ENCODE measurements at regions of chr5 and their contacts with region 1.

Region 1: GRCh38 chr5:91311697-91312501 is 71.2 kb downstream of the ARRDC3 start:
- DNase-seq: peak; percentile 25 to 91 (median 61)
- ATAC-seq: peak; percentile 73
- H3K4me3 ChIP-seq: peak overlapping the region; percentile 1
- H3K4me3 Mint-ChIP-seq: peak overlapping the region; percentile 76
- H3K27ac ChIP-seq: peak overlapping the region; percentile 55 to 59
- H3K27ac Mint-ChIP-seq: peak overlapping the region; percentile 85
- H3K4me1 ChIP-seq: peaks cover 48% of the 10 kb centered on the region
- H3K4me1 Mint-ChIP-seq: peaks cover 47% of the 10 kb centered on the region
- H3K27me3 ChIP-seq: no peaks in the 10 kb centered on the region
- H3K27me3 Mint-ChIP-seq: no peaks in the 10 kb centered on the region
- CTCF ChIP-seq: no peak

Region 2: DNA sequence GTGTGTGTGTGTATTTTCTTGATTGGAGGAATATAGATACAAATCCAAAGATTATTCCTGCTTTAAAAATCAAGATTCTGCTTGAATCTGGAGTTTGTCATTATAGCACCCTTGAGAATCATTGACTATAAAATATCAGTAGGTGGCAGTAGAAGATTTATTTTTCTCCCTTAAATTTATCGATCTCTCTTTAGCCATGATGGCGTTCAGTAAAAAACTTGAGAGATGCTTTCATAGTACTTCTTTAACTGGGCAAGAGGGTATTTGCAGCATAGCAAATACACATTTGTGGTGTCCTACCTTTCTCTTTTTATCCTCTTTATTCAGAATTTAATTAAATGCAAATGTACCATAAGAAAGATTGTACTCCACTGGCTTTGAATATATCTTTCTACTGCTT is 445.6 kb before region 1 on chr5:
- CTCF ChIA-PET with region 1: no interaction called
- POLR2A ChIA-PET with region 1: no interaction called
- intact Hi-C with region 1: no loop called
- DNase-seq: peak in 3 of 14 experiments; percentile 35 to 46 (median 44)
- ATAC-seq: no peak
- H3K4me3 ChIP-seq: no peak overlapping the region
- H3K4me3 Mint-ChIP-seq: no peak overlapping the region
- H3K27ac ChIP-seq: no peak overlapping the region
- H3K27ac Mint-ChIP-seq: no peak overlapping the region
- H3K4me1 ChIP-seq: no peaks in the 10 kb centered on the region
- H3K4me1 Mint-ChIP-seq: peaks cover 7% of the 10 kb centered on the region
- H3K27me3 ChIP-seq: no peaks in the 10 kb centered on the region
- H3K27me3 Mint-ChIP-seq: peaks cover 12% of the 10 kb centered on the region
- CTCF ChIP-seq: peak; percentile 43

Region 3: DNA sequence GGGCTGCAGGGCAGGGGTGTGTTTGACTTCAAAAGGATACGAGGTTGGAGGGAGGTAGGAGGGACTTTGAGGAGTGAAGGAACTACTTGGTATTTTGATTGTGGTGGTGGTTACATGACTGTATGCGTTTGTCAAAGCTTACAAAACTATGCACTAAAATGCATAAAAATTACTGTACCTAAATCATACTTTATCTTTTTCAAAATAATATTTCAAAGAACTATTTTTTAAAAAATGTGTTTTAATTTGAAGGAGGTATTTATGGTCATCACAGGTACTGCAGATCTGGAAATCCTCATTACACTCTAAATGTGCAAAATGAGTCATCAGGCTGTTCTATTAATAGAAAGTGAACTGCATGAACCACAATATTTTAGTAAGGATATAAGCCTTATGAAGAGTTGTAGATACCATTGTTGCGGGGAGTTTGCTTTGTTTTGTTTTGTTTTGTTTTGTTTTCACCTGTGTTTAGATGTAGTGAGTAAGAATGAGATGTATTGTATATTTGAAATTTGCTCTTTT is 45.7 kb before region 1 on chr5:
- CTCF ChIA-PET with region 1: interaction called, 3 read pairs
- POLR2A ChIA-PET with region 1: interaction called, 4 read pairs
- intact Hi-C with region 1: loop called in 1 of 2 experiments (anchors 10 kb)
- DNase-seq: peak in 3 of 14 experiments; percentile 16 to 33 (median 29)
- ATAC-seq: peak; percentile 65
- H3K4me3 ChIP-seq: no peak overlapping the region
- H3K4me3 Mint-ChIP-seq: no peak overlapping the region
- H3K27ac ChIP-seq: no peak overlapping the region
- H3K27ac Mint-ChIP-seq: no peak overlapping the region
- H3K4me1 ChIP-seq: peaks cover 8% of the 10 kb centered on the region
- H3K4me1 Mint-ChIP-seq: peaks cover 21% of the 10 kb centered on the region
- H3K27me3 ChIP-seq: no peaks in the 10 kb centered on the region
- H3K27me3 Mint-ChIP-seq: no peaks in the 10 kb centered on the region
- CTCF ChIP-seq: no peak

Region 4: DNA sequence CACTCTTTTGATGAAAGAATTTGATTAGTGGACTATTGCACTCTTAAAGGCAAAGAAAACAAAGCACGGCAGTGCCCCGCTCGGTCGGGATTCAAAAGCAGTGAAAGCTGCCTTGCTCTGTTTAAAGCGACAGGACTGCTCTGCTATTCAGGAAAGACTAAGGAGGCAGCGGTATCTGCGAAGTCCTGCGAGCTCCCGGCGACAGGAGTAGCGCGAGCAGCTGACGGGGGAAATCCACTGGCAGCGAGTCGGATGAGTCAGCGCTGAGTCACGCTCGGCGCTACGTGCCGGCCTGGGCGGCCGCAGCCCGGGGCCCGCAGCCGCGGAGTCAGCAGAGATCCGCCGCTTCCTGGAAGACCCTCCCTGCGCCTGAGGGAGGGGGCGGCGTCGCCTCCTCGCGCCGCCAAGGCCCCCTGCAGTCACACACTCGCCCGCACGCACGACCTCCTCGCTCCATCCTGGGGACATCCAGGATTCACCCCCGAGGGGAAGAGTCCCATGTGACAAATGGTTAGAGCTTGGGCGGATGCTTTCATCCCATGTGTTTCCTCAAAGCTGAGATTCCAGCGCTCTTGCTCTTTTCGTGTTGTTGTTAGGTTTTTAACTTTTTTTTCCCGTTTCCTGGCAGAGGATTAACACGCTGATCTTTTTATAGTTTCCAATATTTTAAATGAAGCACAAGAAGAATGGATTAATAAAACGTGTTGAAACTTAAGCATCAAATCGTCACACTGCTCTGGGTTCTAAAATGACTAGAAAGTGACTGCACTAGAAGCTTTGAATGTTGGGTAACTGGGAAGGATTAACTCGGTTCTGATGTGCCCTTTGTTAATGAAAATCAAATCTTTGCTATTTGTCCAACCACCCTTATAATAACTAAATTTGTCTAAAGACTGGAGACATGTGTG is 31.3 kb before region 1 on chr5:
- CTCF ChIA-PET with region 1: interaction called, 10 read pairs
- POLR2A ChIA-PET with region 1: interaction called, 46 read pairs
- intact Hi-C with region 1: loop called (anchors 1 to 2 kb)
- DNase-seq: peak; percentile 65 to 95 (median 79)
- ATAC-seq: peak; percentile 84
- H3K4me3 ChIP-seq: peak overlapping the region; percentile 63
- H3K4me3 Mint-ChIP-seq: peak overlapping the region; percentile 90
- H3K27ac ChIP-seq: peak overlapping the region in 1 of 2 donors; percentile 14
- H3K27ac Mint-ChIP-seq: peak overlapping the region; percentile 79
- H3K4me1 ChIP-seq: peaks cover 19% of the 10 kb centered on the region
- H3K4me1 Mint-ChIP-seq: peaks cover 23% of the 10 kb centered on the region
- H3K27me3 ChIP-seq: no peaks in the 10 kb centered on the region
- H3K27me3 Mint-ChIP-seq: no peaks in the 10 kb centered on the region
- CTCF ChIP-seq: no peak